ENCODE measurements at regions of chr12 and their contacts with region 1.

Region 1: DNA sequence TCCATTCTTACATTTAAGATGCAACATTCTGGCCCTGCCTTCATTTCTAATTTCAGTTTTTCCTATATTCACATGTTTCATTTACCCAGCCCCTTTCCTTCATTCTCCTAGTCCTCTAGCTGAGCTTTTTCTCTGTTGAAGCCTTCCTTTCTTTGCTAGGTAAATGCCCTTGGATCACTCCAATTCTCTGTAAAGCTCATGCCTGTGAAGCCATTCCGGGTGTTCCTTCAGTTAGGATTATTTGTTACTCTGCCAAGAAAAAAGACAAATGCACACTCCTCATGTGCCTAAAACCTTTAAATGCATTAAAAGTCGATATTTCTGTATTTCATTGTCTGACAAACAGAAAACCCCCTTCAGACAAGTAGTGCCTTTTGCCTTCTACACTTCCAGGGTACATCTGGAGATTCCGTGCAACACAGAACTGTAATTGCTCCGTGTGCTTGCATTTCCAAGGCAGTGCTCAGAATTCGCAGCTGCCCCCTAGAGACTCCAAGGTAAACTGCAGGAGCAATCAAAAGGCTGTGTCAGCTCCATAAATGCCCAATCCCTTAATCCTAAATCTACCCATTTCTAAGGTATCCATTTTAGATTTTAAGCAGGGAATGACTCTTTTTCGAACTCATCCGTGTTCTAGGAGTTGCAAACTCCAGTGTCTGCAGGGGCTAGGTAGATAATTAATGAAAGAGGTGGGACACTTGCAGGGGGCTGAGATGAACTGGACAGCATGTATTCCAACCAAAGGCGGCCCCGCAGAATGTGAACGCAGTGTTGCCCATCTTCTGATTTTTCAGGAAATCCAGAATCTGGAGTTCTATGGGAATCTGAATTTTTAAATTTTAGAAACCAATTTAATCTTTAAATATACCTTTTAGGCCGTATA is 320.2 kb downstream of the GRIN2B start:
- DNase-seq: peak; percentile 71
- H3K4me3 ChIP-seq: no peak overlapping the region
- H3K27ac ChIP-seq: no peak overlapping the region
- H3K4me1 ChIP-seq: no peaks in the 10 kb centered on the region
- H3K27me3 ChIP-seq: no peaks in the 10 kb centered on the region
- CTCF ChIP-seq: peak; percentile 80

Region 2: DNA sequence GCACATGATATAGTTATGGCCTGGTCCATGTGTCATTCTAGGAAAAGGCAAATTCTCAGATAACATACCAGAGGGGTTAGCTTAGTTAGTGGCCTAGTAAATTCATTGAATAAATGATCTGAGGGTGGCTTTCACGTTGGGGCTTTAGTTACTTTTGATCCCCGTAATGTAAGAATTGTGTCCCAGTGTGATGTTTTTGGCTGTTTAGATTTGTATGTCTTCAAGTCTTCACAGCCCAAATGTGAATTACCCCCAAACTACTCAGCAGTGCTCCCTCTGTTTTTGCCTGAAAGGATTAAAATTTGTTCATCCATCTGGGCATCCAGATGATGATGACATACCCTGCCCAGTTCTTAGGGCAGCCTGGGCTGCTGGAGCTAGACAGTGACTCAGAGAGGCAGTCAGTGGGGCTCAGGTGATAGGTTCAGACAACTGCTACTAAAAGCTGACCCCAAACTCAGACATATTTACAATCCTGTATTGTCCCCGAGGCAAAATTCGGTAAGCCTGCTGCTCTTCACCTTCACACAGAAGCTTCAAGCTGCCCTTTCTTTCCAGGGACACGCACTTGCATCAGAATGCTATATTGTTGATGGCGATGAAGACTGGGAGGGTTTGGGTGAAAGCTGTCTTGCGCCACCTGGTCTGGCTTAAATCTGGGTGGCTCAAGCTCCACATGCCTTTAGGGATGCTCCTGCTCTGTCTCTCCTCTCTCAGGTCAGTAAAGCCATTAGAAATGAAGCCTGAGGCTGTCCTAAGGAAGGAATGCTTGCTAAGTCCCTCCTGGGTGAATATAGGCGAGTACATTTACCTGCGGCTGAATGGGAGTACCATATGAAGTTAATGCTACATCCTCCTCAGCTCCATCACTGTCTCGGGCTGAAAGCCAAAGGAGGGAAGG is 719.5 kb before region 1 on chr12:
- intact Hi-C with region 1: no loop called
- DNase-seq: no peak
- H3K4me3 ChIP-seq: no peak overlapping the region
- H3K27ac ChIP-seq: no peak overlapping the region
- H3K4me1 ChIP-seq: no peaks in the 10 kb centered on the region
- H3K27me3 ChIP-seq: no peaks in the 10 kb centered on the region
- CTCF ChIP-seq: no peak

Region 3: GRCh38 chr12:13278249-13278787 is 382.9 kb before region 1 on chr12:
- intact Hi-C with region 1: loop called (anchors 5 kb)
- DNase-seq: peak; percentile 59
- H3K4me3 ChIP-seq: no peak overlapping the region
- H3K27ac ChIP-seq: no peak overlapping the region
- H3K4me1 ChIP-seq: no peaks in the 10 kb centered on the region
- H3K27me3 ChIP-seq: no peaks in the 10 kb centered on the region
- CTCF ChIP-seq: peak; percentile 99

Region 4: DNA sequence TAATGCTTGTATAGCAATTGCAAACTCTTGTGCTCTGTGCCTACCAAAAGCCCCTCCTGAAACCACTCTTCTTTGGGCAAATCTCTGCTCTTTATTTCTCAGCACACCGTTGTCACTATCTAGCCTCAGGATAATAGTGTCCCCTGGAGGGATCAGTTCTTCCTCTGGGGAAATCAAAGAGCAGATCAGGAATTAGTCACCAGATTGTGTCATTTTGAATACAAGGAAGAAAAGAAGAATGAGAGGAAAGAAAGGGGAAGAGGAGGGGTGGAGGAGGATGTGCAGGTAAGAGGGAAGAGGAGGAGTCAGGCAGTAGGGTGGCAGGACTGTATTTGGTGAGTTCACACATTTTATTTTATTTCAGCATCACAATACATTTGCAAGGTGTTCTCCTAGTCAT is 63.8 kb after region 1 on chr12:
- intact Hi-C with region 1: no loop called
- DNase-seq: no peak
- H3K4me3 ChIP-seq: no peak overlapping the region
- H3K27ac ChIP-seq: no peak overlapping the region
- H3K4me1 ChIP-seq: no peaks in the 10 kb centered on the region
- H3K27me3 ChIP-seq: no peaks in the 10 kb centered on the region
- CTCF ChIP-seq: no peak

Region 5: GRCh38 chr12:13880613-13881012 is 219.4 kb after region 1 on chr12:
- intact Hi-C with region 1: no loop called
- DNase-seq: no peak
- H3K4me3 ChIP-seq: no peak overlapping the region
- H3K27ac ChIP-seq: no peak overlapping the region
- H3K4me1 ChIP-seq: no peaks in the 10 kb centered on the region
- H3K27me3 ChIP-seq: no peaks in the 10 kb centered on the region
- CTCF ChIP-seq: no peak

Region 6: GRCh38 chr12:13935169-13935568 is 273.9 kb after region 1 on chr12:
- intact Hi-C with region 1: no loop called
- DNase-seq: no peak
- H3K4me3 ChIP-seq: no peak overlapping the region
- H3K27ac ChIP-seq: no peak overlapping the region
- H3K4me1 ChIP-seq: no peaks in the 10 kb centered on the region
- H3K27me3 ChIP-seq: no peaks in the 10 kb centered on the region
- CTCF ChIP-seq: no peak